Activated CD8-positive, alpha-beta T cell treated with anti-CD3 and anti-CD28 coated beads, Interleukin-2, amount 10 ng/mL, durations not matched to agents 7 days and 5 days (primary cell): ENCODE measurements at regions of chr3 and their contacts with region 1.

Region 1: GRCh38 chr3:101195951-101196713 is 124.2 kb downstream of the IMPG2 start:
- DNase-seq: no peak
- ATAC-seq: no peak
- H3K4me3 Mint-ChIP-seq: no peak overlapping the region
- H3K27ac Mint-ChIP-seq: no peak overlapping the region
- H3K4me1 Mint-ChIP-seq: no peaks in the 10 kb centered on the region
- H3K27me3 Mint-ChIP-seq: peaks cover 11% of the 10 kb centered on the region

Region 2: GRCh38 chr3:101069901-101070798 is 126.0 kb before region 1 on chr3:
- CTCF ChIA-PET with region 1: interaction called, 10 read pairs
- POLR2A ChIA-PET with region 1: no interaction called
- DNase-seq: peak; percentile 68
- ATAC-seq: peak; percentile 85
- H3K4me3 Mint-ChIP-seq: no peak overlapping the region
- H3K27ac Mint-ChIP-seq: no peak overlapping the region
- H3K4me1 Mint-ChIP-seq: peaks cover 2% of the 10 kb centered on the region
- H3K27me3 Mint-ChIP-seq: peaks cover 26% of the 10 kb centered on the region